ENCODE measurements at regions of chr17 and their contacts with region 1.

Region 1: DNA sequence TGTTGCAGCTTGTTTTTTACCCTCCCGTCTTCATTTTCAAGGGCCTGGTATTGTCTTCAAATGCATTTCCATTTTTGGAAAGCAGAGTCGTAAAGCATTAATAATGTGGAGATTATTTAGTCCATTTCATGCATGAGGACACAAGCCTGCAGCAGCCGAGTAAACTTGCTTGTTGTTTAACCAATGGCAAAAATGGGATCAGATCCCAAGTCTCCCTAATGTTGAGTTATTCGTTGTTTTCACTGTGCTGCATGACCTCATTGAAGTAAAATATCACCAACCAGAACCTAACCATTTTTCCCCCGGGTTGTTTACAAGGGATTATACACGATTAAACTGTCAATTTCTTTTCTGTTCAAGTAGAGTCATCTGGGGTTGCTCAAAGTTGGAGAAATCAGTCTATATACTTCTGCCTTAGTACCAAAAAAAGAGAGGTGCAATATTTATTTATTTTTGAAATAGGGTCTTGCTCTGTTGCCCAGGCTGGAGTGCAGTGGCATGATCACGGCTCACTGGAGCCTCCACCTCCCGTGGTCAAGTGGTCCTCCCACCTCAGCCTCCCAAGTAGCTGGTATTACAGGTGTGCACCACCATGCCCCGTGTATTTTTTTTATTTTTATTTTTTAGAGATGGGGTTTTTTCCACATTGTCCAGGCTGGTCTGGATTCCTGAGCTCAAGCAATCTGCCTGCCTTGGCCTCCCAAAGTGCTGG is 12.4 kb downstream of the AMZ2 start:
- DNase-seq: no peak
- H3K4me3 ChIP-seq: no peak overlapping the region
- H3K27ac ChIP-seq: no peak overlapping the region
- H3K4me1 ChIP-seq: peaks cover 0 to 19% (median 5%) of the 10 kb centered on the region in 4 donors
- H3K27me3 ChIP-seq: no peaks in the 10 kb centered on the region
- CTCF ChIP-seq: no peak
- EP300 ChIP-seq: no peak
- POLR2A ChIP-seq: no peak

Region 2: GRCh38 chr17:68398691-68399637 is 138.8 kb after region 1 on chr17:
- intact Hi-C with region 1: loop called (anchors 2 kb)
- DNase-seq: peak; percentile 70
- H3K4me3 ChIP-seq: no peak overlapping the region
- H3K27ac ChIP-seq: peak overlapping the region in 1 of 4 donors; percentile 18
- H3K4me1 ChIP-seq: no peaks in the 10 kb centered on the region
- H3K27me3 ChIP-seq: no peaks in the 10 kb centered on the region
- CTCF ChIP-seq: peak; percentile 14 to 59 (median 46)
- EP300 ChIP-seq: no peak
- POLR2A ChIP-seq: no peak

Region 3: GRCh38 chr17:68435876-68436842 is 176.0 kb after region 1 on chr17:
- intact Hi-C with region 1: loop called (anchors 2 kb)
- DNase-seq: peak; percentile 84
- H3K4me3 ChIP-seq: no peak overlapping the region
- H3K27ac ChIP-seq: no peak overlapping the region
- H3K4me1 ChIP-seq: peaks cover 0 to 27% (median 5%) of the 10 kb centered on the region in 4 donors
- H3K27me3 ChIP-seq: no peaks in the 10 kb centered on the region
- CTCF ChIP-seq: peak; percentile 71 to 88 (median 84)
- EP300 ChIP-seq: no peak
- POLR2A ChIP-seq: no peak

Measured in sigmoid colon (tissue), 7 donors.